AG04449 (cell line): ENCODE measurements at regions of chr11 and their contacts with region 1.

Region 1: DNA sequence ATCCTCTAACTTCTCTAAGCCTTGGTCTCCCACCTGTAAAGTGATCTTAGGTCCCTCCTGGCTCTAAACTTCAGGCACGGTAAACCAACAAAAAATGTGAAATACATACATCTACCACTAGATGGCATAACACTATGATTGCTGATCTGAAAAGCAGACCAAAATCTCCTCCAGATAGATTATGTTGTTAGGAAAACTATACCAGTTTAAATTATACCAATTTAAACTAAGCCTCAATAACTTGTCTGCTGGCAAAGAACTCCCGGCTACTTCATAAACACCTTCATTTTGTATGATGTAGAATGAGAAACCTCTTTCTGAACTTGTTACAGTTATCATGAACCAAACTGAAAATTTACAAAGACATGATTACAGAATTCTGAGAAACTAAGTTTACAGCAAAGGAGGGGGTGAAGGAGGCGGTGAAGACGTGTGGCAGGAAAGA is 85.9 kb downstream of the SBF2 start:
- DNase-seq: no peak
- H3K4me3 ChIP-seq: no peak overlapping the region
- CTCF ChIP-seq: peak; percentile 49

Region 2: GRCh38 chr11:9739123-9739894 is 468.8 kb before region 1 on chr11:
- CTCF ChIA-PET with region 1: no interaction called
- POLR2A ChIA-PET with region 1: no interaction called
- DNase-seq: no peak
- H3K4me3 ChIP-seq: no peak overlapping the region
- CTCF ChIP-seq: no peak

Region 3: DNA sequence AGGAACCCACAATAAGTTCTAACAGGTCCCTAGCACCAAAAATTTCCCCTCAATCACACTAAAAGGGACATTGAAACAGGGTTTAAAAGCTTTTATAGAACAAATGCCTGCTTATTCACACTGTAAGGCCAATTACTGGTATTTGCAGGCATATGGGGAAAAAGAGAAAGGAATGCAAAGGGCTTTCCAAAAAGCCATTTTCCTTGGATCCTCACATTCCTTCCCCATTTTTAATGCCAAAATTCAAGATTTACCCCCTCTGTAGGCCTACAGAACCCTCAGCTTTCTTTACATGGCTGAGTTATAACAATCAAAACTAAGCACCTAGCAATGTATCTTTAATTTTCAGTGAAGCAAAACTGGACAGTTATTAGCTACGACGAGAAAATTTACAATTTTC is 16.1 kb before region 1 on chr11:
- CTCF ChIA-PET with region 1: interaction called, 75 read pairs
- POLR2A ChIA-PET with region 1: no interaction called
- DNase-seq: no peak
- H3K4me3 ChIP-seq: no peak overlapping the region
- CTCF ChIP-seq: no peak

Region 4: GRCh38 chr11:10221342-10221741 is 13.2 kb after region 1 on chr11:
- CTCF ChIA-PET with region 1: interaction called, 28 read pairs
- POLR2A ChIA-PET with region 1: no interaction called
- DNase-seq: no peak
- H3K4me3 ChIP-seq: no peak overlapping the region
- CTCF ChIP-seq: no peak

Region 5: GRCh38 chr11:10298342-10298741 is 90.2 kb after region 1 on chr11:
- CTCF ChIA-PET with region 1: interaction called, 33 read pairs
- POLR2A ChIA-PET with region 1: no interaction called
- DNase-seq: peak; percentile 81
- H3K4me3 ChIP-seq: no peak overlapping the region
- CTCF ChIP-seq: peak; percentile 35